HepG2 (cell line): ENCODE measurements at regions of chr6 and their contacts with region 1.

Region 1: GRCh38 chr6:93423542-93423941 is 4.2 kb upstream of the EPHA7 start:
- DNase-seq: peak; percentile 62
- ATAC-seq: peak; percentile 78
- H3K4me3 ChIP-seq: no peak overlapping the region
- H3K27ac ChIP-seq: no peak overlapping the region
- H3K4me1 ChIP-seq: no peaks in the 10 kb centered on the region
- H3K27me3 ChIP-seq: no peaks in the 10 kb centered on the region
- CTCF ChIP-seq: peak; percentile 58
- EP300 ChIP-seq: no peak
- POLR2A ChIP-seq: no peak
- RAD21 ChIP-seq: no peak

Region 2: GRCh38 chr6:92810913-92811312 is 612.6 kb before region 1 on chr6:
- CTCF ChIA-PET with region 1: interaction called, 5 read pairs
- POLR2A ChIA-PET with region 1: no interaction called
- in situ Hi-C with region 1: no loop called
- intact Hi-C with region 1: loop called (anchors 1 kb)
- DNase-seq: peak; percentile 40
- ATAC-seq: peak; percentile 97
- H3K4me3 ChIP-seq: no peak overlapping the region
- H3K27ac ChIP-seq: no peak overlapping the region
- H3K4me1 ChIP-seq: no peaks in the 10 kb centered on the region
- H3K27me3 ChIP-seq: no peaks in the 10 kb centered on the region
- CTCF ChIP-seq: peak; percentile 64
- EP300 ChIP-seq: no peak
- POLR2A ChIP-seq: no peak
- RAD21 ChIP-seq: no peak

Region 3: DNA sequence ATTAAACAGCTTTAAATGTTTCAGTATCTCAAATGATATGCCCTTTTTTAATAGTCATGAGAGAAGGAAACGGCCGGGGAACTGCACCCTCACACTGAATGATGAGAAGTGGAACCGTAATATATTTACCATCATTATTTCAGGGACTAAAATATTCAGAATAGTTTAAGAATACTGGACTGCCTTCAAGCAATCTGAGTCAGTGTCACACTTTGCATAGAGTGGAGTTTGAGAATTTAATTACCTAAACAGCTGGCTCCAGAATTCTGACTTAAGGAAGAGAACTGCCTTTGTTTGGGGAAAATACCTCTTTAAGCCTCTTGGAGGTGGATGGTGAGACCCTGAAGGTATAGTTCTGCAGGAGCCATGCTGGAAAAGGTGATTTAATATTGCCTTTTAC is 131.8 kb after region 1 on chr6:
- CTCF ChIA-PET with region 1: no interaction called
- POLR2A ChIA-PET with region 1: no interaction called
- in situ Hi-C with region 1: no loop called
- intact Hi-C with region 1: no loop called
- DNase-seq: no peak
- ATAC-seq: no peak
- H3K4me3 ChIP-seq: no peak overlapping the region
- H3K27ac ChIP-seq: no peak overlapping the region
- H3K4me1 ChIP-seq: no peaks in the 10 kb centered on the region
- H3K27me3 ChIP-seq: no peaks in the 10 kb centered on the region
- CTCF ChIP-seq: no peak
- EP300 ChIP-seq: no peak
- POLR2A ChIP-seq: no peak
- RAD21 ChIP-seq: no peak

Region 4: DNA sequence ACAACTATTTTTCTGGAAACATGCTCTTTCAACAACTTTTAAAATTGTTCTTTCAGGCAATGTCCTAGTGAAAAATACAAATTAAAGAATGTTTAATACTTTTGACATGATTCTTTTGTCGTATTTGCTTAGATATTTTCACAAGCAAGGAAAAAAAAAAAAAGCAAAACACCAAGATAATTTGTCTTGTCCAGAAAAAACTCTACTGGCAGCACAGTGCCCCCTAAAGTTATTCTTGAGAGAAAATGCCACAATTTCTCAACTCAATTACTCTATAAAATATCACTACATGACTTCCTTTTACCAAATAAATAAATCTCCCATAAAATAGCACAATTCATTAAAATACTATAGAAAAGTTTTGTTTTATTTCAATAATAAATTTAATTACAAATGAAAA is 648.3 kb after region 1 on chr6:
- CTCF ChIA-PET with region 1: no interaction called
- POLR2A ChIA-PET with region 1: no interaction called
- in situ Hi-C with region 1: no loop called
- intact Hi-C with region 1: loop called (anchors 2 kb)
- DNase-seq: no peak
- ATAC-seq: no peak
- H3K4me3 ChIP-seq: no peak overlapping the region
- H3K27ac ChIP-seq: no peak overlapping the region
- H3K4me1 ChIP-seq: no peaks in the 10 kb centered on the region
- H3K27me3 ChIP-seq: no peaks in the 10 kb centered on the region
- CTCF ChIP-seq: no peak
- EP300 ChIP-seq: no peak
- POLR2A ChIP-seq: no peak
- RAD21 ChIP-seq: no peak

Region 5: DNA sequence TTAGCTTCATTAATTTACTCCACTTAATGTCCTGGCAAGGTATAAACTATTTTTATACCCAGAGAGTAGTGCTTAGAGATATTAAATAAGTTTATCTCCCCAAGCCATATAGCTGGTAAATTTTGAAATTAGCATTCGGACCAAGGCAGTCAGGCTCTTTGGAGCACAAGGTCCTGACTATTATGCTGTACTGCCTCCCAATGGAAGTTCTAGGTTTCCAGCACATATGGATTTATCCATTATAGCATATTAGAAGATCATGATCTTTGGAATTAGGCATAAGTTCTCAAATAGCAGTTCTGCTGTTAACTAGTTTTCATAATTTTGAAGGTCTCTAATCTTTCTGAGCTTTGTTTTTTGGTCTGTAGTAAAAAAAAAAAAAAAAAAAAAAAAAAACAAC is 831.1 kb after region 1 on chr6:
- CTCF ChIA-PET with region 1: no interaction called
- POLR2A ChIA-PET with region 1: no interaction called
- in situ Hi-C with region 1: no loop called
- intact Hi-C with region 1: loop called (anchors 2 kb)
- DNase-seq: peak; percentile 4
- ATAC-seq: no peak
- H3K4me3 ChIP-seq: no peak overlapping the region
- H3K27ac ChIP-seq: no peak overlapping the region
- H3K4me1 ChIP-seq: no peaks in the 10 kb centered on the region
- H3K27me3 ChIP-seq: no peaks in the 10 kb centered on the region
- CTCF ChIP-seq: peak; percentile 40; the same call in 1 of the 2 replicates
- EP300 ChIP-seq: no peak
- POLR2A ChIP-seq: no peak
- RAD21 ChIP-seq: no peak